Cardiac septum (tissue), 1 donor: ENCODE measurements at regions of chr12 and their contacts with region 1.

Region 1: GRCh38 chr12:19288603-19289244 is 150.6 kb upstream of the AEBP2 start:
- DNase-seq: no peak

Region 2: GRCh38 chr12:18849761-18850160 is 439.0 kb before region 1 on chr12:
- intact Hi-C with region 1: loop called (anchors 10 kb)
- DNase-seq: no peak

Region 3: GRCh38 chr12:19451196-19451595 is 162.5 kb after region 1 on chr12:
- intact Hi-C with region 1: loop called (anchors 10 kb)
- DNase-seq: no peak

Region 4: GRCh38 chr12:19517583-19517982 is 228.9 kb after region 1 on chr12:
- intact Hi-C with region 1: no loop called
- DNase-seq: no peak